Ovary (tissue), 10 donors: ENCODE measurements at regions of chr19 and their contacts with region 1.

Region 1: DNA sequence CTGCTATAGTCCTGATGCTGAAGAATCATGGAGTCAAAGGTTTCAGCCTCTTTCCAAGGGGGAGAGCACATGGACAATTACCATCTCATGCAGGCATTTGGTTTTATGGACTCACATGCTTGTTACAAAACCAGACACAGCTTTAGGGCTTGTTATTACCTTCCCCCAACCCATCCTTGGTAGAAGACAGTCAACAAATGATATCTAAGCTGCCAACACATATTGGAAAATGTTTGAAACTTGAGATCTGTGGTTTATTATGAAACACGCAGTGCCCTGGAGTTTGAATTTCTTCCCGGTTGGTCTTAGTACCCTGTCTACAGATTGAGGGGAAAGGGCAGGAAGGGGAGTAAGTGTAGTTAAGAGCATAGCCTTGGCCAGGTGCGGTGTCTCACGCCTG is 12.5 kb upstream of the CYP2A6 start:
- DNase-seq: no peak
- H3K4me3 ChIP-seq: no peak overlapping the region
- H3K27ac ChIP-seq: peak overlapping the region in 1 of 2 donors; percentile 4
- H3K4me1 ChIP-seq: peaks cover 12% of the 10 kb centered on the region
- H3K27me3 ChIP-seq: no peaks in the 10 kb centered on the region
- CTCF ChIP-seq: no peak
- EP300 ChIP-seq: no peak
- POLR2A ChIP-seq: no peak

Region 2: DNA sequence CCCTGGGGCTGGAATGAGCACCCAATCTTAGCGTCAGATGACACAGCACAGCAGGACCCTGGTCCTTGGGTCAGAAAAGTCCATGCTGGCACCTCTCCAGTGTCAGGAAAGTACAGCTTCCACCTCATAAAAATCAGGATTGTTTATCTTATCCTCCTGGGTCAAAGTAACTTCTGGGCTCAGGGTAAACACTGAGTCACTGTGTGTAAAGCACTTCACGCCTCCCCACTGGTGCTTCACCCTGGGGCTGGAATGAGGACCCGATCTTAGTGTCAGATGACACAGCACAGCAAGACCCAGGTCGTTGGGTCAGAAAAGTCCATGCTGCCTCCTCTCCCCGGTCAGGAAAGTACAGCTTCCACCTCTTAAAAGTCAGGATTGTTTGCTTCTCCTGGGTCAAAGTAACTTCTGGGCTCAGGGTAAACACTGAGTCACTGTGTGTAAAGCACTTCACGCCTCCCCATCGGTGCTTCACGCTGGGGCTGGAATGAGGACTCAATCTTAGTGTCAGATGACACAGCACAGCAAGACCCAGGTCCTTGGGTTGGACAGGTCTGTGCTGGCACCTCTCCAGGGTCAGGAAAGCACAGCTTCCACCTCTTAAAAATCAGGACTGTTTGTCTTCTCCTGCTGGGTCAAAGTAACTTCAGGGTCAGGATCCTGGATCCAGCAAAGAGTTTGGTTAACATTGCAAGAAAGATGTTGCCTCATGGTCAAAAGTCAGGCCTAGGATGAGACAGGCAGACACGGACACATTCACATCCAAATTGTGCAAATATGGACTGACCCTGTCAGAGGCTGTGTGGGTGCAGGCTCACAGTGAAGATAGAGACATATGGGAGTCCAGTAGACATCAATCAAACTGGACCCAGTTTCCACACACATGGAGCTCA is 58.5 kb after region 1 on chr19:
- intact Hi-C with region 1: loop called in 1 of 4 experiments (anchors 10 kb)
- DNase-seq: peak; percentile 48 to 68 (median 60)
- H3K4me3 ChIP-seq: no peak overlapping the region
- H3K27ac ChIP-seq: peak overlapping the region in 1 of 2 donors; percentile 49
- H3K4me1 ChIP-seq: peaks cover 15% of the 10 kb centered on the region
- H3K27me3 ChIP-seq: no peaks in the 10 kb centered on the region
- CTCF ChIP-seq: no peak
- EP300 ChIP-seq: no peak
- POLR2A ChIP-seq: no peak

Region 3: DNA sequence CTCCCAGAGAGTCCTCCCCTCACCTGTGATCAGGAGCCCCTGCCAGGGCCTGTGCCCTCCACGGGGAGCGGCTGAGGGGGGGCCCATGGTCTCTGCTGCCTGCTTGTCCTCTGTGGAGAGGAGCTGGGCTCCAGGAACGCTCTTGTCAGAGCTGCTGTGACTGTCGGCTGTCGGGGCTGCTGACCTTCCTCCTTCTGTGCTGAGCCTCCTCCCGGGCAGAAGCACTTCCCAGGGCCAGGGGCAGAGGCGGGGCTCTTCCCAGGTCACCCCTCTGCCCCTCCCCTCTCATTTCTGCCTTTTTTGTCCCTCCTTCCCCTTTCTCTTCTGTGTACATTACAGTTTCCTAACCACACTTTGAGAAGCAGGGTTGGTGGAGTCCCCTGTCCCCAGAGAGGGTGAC is 764.1 kb after region 1 on chr19 and contains the start of gene CEACAM4:
- intact Hi-C with region 1: no loop called
- DNase-seq: no peak
- H3K4me3 ChIP-seq: no peak within 1 kb of the TSS
- H3K27ac ChIP-seq: no peak within 1 kb of the TSS
- H3K4me1 ChIP-seq: no peaks in the 10 kb centered on the region
- H3K27me3 ChIP-seq: no peaks in the 10 kb centered on the region
- CTCF ChIP-seq: no peak
- EP300 ChIP-seq: no peak
- POLR2A ChIP-seq: no peak
- total RNA-seq, gene CEACAM4: 0.18 to 0.74 (median 0.40) TPM in 3 of 7 donors, not detected in the others